Activated CD4-positive, alpha-beta memory T cell treated with anti-CD3 and anti-CD28 coated beads for 36 hours (primary cell): ENCODE measurements at regions of chr3 and their contacts with region 1.

Region 1: DNA sequence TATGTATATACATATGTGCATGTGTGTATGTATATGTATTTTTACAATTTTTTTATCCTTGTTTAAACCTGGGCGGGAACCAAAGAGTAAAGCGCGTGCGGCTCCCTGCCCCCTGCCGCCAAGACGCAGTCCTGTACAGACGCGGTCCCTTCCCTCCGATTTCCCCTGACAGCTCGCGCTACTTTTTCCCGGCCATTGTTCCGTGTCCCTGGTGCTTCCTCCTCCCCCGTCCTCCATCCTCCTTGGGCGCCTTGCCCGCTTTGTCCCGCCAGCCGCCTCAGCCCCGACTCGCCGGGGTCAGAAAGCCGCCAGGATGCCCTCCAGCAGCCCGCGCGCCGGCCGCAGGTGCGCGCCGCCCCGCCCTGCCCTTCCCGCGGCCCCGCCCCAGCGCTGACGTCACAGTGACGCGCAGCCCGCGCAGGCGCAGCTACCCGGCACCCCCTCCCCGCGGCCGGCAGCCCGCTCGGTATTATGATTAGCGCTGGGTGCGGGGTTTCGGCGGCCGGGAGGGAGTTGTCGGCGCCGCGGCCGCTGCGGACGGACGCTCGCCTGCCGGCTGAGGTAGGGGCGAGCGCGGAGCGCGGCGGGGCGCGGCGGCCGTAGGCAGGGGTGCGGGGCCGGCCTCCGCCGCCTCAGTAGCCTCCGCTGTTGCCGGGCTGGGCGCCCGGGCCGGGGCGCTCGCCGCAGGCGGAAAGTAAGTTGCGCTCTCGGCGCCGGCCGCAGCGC is at the start of gene SNRK:
- DNase-seq: peak; percentile 93
- H3K4me3 Mint-ChIP-seq: peak within 1 kb of the TSS; percentile 94
- H3K27ac Mint-ChIP-seq: peak within 1 kb of the TSS; percentile 95
- H3K4me1 Mint-ChIP-seq: peaks cover 38% of the 10 kb centered on the region
- H3K27me3 Mint-ChIP-seq: no peaks in the 10 kb centered on the region
- total RNA-seq, gene SNRK: 23.9 to 24.4 TPM

Region 2: GRCh38 chr3:43024181-43024885 is 261.9 kb before region 1 on chr3:
- CTCF ChIA-PET with region 1: no interaction called
- POLR2A ChIA-PET with region 1: no interaction called
- intact Hi-C with region 1: no loop called
- DNase-seq: peak; percentile 70
- H3K4me3 Mint-ChIP-seq: peak overlapping the region; percentile 25
- H3K27ac Mint-ChIP-seq: peak overlapping the region; percentile 30
- H3K4me1 Mint-ChIP-seq: peaks cover 58% of the 10 kb centered on the region
- H3K27me3 Mint-ChIP-seq: no peaks in the 10 kb centered on the region

Region 3: DNA sequence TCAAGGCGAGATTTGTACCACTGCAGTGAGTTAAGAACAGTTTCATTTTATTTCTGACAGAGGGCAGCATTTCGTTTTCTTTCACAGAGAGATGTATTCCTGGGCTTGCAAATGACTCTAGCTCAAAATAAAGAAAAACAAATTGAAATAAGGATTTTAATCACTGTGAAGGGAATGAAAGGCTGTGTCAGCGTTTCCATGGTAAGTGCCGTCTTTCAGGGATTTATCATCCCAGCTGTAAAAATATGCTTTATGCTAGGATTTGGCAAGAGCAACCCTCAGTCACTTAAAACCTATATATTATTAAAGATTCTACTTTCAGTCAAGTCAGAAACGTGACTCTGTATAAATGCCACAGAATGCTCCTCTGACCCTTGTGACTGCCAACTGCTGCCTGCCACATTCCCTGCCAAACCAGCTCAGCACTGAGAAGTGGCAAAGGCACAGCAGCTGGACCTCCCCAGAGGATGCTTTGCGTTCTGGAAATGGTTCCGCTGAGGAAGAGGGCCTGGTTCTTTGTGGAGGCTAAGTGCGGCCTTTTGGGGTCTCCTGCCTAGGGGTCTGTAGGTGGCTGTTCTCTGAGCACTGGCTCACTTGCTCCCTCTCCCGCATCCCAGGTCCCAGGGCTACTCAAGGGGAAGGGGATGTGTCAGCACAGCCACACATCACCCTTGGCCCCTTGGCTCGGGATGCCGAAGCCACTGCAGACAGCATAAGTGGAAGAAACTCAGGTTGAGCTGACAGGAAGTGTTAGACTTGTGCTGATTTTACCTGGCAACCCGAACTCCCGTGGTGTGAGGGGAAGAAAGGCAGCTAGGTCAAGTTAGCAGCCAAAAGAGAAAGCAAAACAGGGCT is 123.8 kb before region 1 on chr3:
- CTCF ChIA-PET with region 1: interaction called, 8 read pairs
- POLR2A ChIA-PET with region 1: no interaction called
- intact Hi-C with region 1: loop called (anchors 2 kb)
- DNase-seq: peak; percentile 60
- H3K4me3 Mint-ChIP-seq: peak overlapping the region; percentile 65
- H3K27ac Mint-ChIP-seq: peak overlapping the region; percentile 84
- H3K4me1 Mint-ChIP-seq: peaks cover 24% of the 10 kb centered on the region
- H3K27me3 Mint-ChIP-seq: no peaks in the 10 kb centered on the region

Region 4: DNA sequence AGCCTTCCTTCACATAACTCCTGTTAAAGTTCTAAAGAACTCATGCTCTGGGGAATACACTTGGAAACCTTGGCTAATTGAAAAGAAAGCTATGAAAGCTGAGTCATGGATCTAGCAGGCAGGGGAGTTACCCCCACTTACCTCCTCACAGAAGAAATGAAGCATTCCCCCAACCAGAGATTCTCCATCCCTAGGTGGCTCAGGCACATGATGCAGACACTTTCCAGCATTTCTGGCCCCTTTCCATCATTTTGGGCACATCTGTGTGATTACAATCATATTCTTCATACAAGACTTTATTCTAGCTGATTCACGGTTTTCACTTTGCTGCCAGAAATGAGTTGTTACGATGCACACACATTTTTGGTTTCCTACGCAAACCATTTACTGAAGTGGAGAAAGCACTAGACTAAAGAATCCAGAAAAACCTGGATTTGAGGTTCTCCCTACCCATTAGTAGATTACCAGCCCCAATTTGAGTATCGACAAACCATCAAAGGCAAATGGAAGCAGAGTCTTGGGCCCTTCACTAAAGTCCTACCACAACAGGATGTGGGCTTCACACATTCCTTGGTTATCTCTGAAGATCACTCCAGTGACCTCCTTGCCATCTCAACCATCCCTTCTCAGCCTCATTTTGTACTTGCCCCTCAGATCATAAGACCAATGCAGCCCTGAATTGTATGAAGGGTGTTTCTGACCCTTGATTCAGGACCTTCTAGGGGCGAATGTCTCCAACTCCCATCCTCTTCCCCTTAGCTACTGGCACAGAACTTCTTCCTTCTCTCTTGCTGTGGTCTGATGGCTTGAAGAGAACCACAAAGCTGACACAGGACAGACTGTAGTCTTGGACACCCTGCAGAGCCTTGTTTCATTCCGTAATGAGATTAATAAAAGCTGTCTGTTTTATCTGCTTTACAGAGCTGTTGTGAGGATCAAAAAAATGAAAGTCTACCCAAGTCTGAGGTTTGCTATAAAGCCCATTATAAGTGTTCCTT is 42.4 kb before region 1 on chr3:
- CTCF ChIA-PET with region 1: no interaction called
- POLR2A ChIA-PET with region 1: no interaction called
- intact Hi-C with region 1: loop called (anchors 2 kb)
- DNase-seq: peak; percentile 39
- H3K4me3 Mint-ChIP-seq: no peak overlapping the region
- H3K27ac Mint-ChIP-seq: peak overlapping the region; percentile 0
- H3K4me1 Mint-ChIP-seq: peaks cover 35% of the 10 kb centered on the region
- H3K27me3 Mint-ChIP-seq: no peaks in the 10 kb centered on the region

Region 5: DNA sequence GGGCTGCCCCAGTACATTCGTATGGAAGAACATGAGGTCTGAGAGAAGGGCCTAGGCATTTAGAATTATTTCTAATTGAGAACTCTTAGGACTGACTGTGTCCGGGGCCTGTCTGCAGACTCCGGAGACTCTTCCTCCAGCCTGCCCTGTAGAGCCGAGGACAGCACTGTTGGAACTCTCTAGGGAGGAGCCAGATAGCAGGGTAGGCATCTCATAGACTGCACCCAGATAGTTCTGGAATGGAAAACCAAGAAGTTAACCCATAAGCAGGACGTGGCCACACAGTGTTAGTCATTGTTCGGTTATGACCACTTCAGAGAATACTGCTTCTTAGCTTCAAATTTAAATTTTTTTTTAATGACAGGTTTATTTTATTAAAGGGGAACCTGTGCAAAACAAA is 59.6 kb after region 1 on chr3:
- CTCF ChIA-PET with region 1: no interaction called
- POLR2A ChIA-PET with region 1: interaction called, 4 read pairs
- intact Hi-C with region 1: loop called (anchors 2 kb)
- DNase-seq: peak; percentile 54
- H3K4me3 Mint-ChIP-seq: no peak overlapping the region
- H3K27ac Mint-ChIP-seq: peak overlapping the region; percentile 75
- H3K4me1 Mint-ChIP-seq: peaks cover 56% of the 10 kb centered on the region
- H3K27me3 Mint-ChIP-seq: no peaks in the 10 kb centered on the region

Region 6: DNA sequence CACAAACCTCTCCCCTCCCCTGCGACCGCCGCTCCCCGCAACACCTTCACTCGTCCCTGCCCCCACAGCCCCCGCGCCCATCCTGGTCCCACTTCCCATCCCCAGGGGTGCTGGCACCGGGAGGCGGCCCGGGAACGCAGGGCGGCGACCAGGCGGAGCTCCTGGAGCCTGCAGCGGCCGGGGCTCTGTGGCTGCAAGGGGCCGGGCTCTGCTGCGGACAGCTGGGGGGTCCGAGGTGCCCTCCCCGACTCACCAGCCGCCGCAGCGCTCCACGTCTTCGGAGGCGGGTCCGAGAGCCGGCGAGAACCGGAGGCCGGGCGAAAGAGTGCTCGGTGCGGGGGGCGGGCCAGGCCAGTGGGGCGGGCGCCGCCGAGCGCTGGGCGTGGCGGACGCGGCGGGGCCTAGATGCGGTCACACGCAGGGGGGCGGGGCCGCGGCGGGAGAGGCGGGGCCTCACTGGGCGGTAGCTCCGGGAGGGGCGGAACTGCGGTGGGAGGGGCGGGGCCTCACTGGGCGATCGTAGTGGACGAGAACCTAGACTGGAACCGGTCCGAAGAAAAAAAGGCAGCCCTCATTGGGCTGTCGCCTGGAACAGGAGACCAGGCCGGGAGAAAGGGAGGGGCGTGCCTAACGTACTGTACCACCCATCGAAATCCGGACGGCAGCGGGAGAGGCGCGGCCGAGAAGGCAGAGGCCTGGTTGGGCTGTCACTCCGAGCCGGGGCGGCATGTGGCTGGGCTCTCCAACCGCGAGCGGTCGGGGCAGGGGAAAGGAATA is 335.6 kb after region 1 on chr3 and contains the start of gene ANO10:
- CTCF ChIA-PET with region 1: no interaction called
- POLR2A ChIA-PET with region 1: no interaction called
- intact Hi-C with region 1: loop called (anchors 10 kb)
- DNase-seq: peak; percentile 97
- H3K4me3 Mint-ChIP-seq: peak within 1 kb of the TSS; percentile 82
- H3K27ac Mint-ChIP-seq: peak within 1 kb of the TSS; percentile 70
- H3K4me1 Mint-ChIP-seq: peaks cover 10% of the 10 kb centered on the region
- H3K27me3 Mint-ChIP-seq: no peaks in the 10 kb centered on the region
- total RNA-seq, gene ANO10: 8.4 to 8.5 TPM